ENCODE measurements at regions of chr10 and their contacts with region 1.

Region 1: DNA sequence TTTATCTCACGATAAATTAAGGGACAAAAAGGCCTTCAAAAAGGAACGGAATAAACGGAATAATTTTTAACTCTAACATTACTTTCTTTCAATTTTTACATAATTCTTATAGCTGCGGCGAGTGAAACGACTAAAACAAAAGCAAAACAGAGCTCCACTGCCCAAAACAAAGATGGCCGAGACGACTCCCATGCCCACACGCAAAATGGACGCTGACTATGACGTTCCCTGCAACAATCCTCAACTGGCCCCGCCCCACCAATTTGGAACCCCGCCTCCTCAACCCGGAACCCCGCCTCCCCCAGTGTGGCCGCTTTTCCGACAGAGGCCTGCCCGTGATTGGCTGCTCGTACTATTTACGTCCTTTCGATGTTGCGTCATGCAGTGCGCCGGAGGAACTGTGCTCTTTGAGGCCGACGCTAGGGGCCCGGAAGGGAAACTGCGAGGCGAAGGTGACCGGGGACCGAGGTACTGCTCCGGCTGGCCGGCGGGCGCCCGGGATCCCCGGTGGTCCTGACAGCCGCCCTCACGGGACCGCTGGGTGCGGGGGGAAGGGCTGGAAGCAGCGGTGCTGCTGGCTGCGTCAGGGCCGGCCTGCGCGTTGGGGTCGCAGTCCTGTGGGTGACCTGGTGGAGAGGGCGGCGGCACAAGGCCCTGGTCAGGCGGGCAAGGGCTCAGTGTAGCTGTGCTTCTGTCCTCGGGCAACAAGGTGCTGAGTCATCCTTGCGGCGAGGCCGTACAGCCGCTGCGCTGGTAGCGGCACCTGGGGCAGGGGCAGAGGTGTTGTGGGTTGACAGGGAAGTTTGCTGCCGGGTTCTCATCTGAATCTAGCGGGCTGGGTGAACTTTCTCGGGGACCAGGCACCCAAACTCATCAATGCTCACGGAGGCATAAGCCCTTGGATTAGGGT is at the start of gene GHITM:
- DNase-seq: peak; percentile 99
- H3K4me3 ChIP-seq: peak within 1 kb of the TSS; percentile 67 to 97
- H3K27ac ChIP-seq: peak within 1 kb of the TSS; percentile 84 to 93
- H3K4me1 ChIP-seq: no peaks in the 10 kb centered on the region
- H3K27me3 ChIP-seq: no peaks in the 10 kb centered on the region
- CTCF ChIP-seq: peak in 3 of 4 experiments; percentile 24 to 69 (median 61)
- POLR2A ChIP-seq: peak; percentile 74
- total RNA-seq, gene GHITM: 122 to 143 TPM

Region 2: GRCh38 chr10:84224411-84225028 is 85.1 kb after region 1 on chr10:
- intact Hi-C with region 1: no loop called
- DNase-seq: no peak
- H3K4me3 ChIP-seq: no peak overlapping the region
- H3K27ac ChIP-seq: no peak overlapping the region
- H3K4me1 ChIP-seq: no peaks in the 10 kb centered on the region
- H3K27me3 ChIP-seq: no peaks in the 10 kb centered on the region
- CTCF ChIP-seq: no peak
- POLR2A ChIP-seq: no peak

Region 3: DNA sequence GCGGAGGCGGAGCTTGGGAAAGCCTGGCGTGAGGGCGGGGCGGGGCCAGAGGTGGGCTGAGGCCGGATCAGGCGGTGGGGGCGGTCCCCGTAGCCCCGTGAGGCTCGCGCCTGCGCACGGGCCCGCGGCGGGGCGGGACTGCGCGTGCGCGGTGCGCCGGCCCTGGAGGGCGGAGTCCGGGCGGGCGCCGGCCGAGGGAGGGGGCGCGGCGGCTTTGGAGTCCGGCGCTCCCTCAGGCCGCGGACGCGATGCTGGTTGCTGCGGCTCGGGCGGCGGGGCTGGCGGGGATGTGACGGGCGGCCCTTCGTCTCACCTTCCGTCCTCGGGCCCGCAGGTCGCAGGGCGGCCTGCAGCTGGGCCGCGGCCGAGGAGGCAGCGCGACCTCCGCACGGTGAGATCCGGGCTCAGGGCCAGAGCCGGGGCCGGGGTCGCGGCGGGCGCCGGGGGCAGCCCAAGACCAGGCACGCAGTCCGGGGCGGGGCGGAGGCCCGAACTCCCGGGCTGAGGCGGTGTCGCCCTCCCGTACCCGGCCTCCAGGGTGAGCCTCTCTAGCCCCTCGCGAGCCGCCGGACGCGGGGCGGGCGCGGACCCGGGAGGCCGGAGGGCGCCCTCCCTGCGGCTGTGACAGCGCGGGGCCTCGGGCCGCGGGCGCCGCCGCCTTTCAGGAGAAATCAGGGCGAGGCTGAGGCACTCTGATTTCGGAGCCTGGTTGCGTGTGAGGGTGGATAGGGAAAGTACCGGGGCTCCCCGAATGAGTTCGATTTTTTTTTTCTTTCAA is 189.2 kb after region 1 on chr10 and contains the start of gene CCSER2:
- intact Hi-C with region 1: loop called (anchors 5 kb)
- DNase-seq: peak; percentile 95
- H3K4me3 ChIP-seq: peak within 1 kb of the TSS; percentile 95 to 98
- H3K27ac ChIP-seq: peak within 1 kb of the TSS; percentile 89
- H3K4me1 ChIP-seq: no peaks in the 10 kb centered on the region
- H3K27me3 ChIP-seq: no peaks in the 10 kb centered on the region
- CTCF ChIP-seq: peak in 1 of 4 experiments; percentile 22
- POLR2A ChIP-seq: peak; percentile 85
- total RNA-seq, gene CCSER2: 30.4 to 53.6 TPM

Region 4: DNA sequence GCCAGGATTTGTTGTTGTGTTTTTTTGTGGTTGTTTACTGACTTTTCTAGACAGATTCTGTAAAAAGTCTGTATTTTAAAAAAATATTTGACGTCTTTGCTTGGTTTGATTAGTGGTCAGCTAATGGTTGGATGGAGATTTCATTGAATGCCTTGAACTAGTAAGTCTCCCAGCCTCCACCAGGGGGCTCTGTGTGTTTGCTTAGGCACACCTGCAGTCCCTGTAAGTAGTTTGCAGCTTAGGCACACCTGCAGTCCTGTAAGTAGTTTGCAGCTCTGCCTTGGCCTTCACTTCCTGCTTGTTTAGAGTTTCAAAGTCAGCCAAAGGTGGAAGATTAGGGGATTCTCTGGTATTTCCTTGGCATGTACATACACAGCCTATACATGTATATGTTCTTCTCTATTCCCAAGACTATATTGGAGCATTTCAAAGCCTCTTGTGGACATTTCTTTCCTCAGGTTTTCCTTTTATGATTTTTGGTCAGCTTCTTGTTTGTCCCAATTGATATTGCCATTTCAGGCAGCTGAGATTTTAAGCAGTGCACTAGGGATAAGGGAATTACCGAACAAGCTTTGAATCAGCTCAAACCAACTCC is 290.6 kb after region 1 on chr10:
- intact Hi-C with region 1: no loop called
- DNase-seq: peak; percentile 23
- H3K4me3 ChIP-seq: no peak overlapping the region
- H3K27ac ChIP-seq: no peak overlapping the region
- H3K4me1 ChIP-seq: no peaks in the 10 kb centered on the region
- H3K27me3 ChIP-seq: no peaks in the 10 kb centered on the region
- CTCF ChIP-seq: peak in 3 of 4 experiments; percentile 15 to 47 (median 44)
- POLR2A ChIP-seq: no peak